Activated CD8-positive, alpha-beta T cell treated with anti-CD3 and anti-CD28 coated beads, Interleukin-2, amount 10 ng/mL, durations not matched to agents 7 days and 5 days (primary cell): ENCODE measurements at regions of chr3 and their contacts with region 1.

Region 1: GRCh38 chr3:125141596-125142419 is 70.7 kb downstream of the SLC12A8 start:
- DNase-seq: peak; percentile 90
- ATAC-seq: peak; percentile 87
- H3K4me3 Mint-ChIP-seq: peak overlapping the region; percentile 74
- H3K27ac Mint-ChIP-seq: peak overlapping the region; percentile 97
- H3K4me1 Mint-ChIP-seq: peaks cover 73% of the 10 kb centered on the region
- H3K27me3 Mint-ChIP-seq: peaks cover 10% of the 10 kb centered on the region

Region 2: DNA sequence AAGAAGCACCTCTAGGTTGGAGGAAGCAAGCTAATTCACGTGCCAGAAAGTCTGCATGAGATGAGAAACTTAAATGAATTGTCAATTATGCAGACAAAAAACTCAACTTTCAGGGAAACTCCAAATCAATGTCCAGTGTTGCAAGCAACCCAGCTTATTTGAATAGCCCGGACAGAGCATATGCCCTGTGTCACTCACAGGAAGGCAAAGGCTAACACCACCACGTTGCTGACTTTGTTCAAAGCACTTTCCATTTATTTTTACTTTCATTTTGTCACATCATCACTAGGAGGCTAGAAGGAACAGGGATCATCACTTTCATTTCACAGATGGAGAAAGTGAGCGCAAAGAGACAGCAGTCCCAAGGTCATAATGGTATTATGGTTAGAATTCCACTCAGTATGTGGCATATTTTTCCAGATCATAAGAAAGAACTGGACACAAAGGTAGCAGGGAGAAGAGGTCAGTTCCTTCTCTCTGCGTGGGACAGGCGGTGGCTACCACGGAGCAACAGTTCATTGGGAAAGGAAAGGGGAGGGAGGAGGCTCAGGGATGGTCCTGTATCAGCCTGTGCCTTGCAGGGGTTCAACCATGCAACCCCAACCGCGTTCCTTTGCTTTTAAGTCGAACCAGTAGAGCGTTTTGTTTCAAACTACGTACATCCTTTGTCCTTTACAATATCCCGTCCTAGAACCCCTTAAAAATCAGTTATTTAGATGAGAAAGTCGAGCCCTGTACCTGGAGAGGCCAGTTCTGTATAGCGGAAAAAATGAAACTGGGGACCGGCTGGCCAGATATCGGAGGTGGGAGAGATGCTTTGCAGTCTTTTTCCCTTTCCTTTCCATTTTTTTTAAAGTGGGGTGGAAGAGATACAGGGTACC is 87.1 kb before region 1 on chr3:
- CTCF ChIA-PET with region 1: interaction called, 16 read pairs
- POLR2A ChIA-PET with region 1: interaction called, 3 read pairs
- DNase-seq: peak; percentile 43
- ATAC-seq: peak; percentile 28
- H3K4me3 Mint-ChIP-seq: peak overlapping the region; percentile 92
- H3K27ac Mint-ChIP-seq: peak overlapping the region; percentile 84
- H3K4me1 Mint-ChIP-seq: peaks cover 67% of the 10 kb centered on the region
- H3K27me3 Mint-ChIP-seq: peaks cover 2% of the 10 kb centered on the region

Region 3: GRCh38 chr3:125240496-125240895 is 98.7 kb after region 1 on chr3:
- CTCF ChIA-PET with region 1: no interaction called
- POLR2A ChIA-PET with region 1: no interaction called
- DNase-seq: no peak
- ATAC-seq: no peak
- H3K4me3 Mint-ChIP-seq: no peak overlapping the region
- H3K27ac Mint-ChIP-seq: no peak overlapping the region
- H3K4me1 Mint-ChIP-seq: peaks cover 4% of the 10 kb centered on the region
- H3K27me3 Mint-ChIP-seq: no peaks in the 10 kb centered on the region